Astrocyte of the cerebellum (primary cell): ENCODE measurements at regions of chr16 and their contacts with region 1.

Region 1: DNA sequence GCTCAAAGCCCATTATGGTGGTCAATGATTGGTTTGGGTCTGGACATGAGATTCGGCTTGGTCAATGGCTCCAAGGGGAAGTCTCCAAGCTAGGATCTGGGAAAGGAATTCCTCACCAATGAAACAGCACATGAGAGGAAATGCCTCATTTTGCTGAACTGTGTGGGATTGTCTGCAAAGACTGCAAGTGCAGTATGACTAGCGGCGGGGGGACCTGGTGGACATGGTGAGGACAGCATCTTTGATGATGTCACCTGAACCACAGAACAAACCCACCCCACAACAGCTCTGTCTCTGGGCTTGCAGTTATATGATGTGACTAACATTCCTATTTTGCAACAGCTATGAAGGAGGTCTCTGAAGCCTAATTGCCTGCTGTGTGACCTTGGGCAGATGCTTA is 50.6 kb upstream of the NKD1 start:
- DNase-seq: peak; percentile 8
- H3K4me3 ChIP-seq: no peak overlapping the region
- CTCF ChIP-seq: no peak

Region 2: GRCh38 chr16:50414152-50414551 is 83.4 kb before region 1 on chr16:
- in situ Hi-C with region 1: loop called (anchors 5 kb)
- DNase-seq: no peak
- H3K4me3 ChIP-seq: no peak overlapping the region
- CTCF ChIP-seq: no peak